ENCODE measurements at regions of chr2 and their contacts with region 1.

Region 1: GRCh38 chr2:120343433-120344105 is 2.4 kb upstream of the INHBB start:
- DNase-seq: peak; percentile 90
- ATAC-seq: peak; percentile 78
- H3K4me3 Mint-ChIP-seq: peak overlapping the region; percentile 53
- H3K27ac Mint-ChIP-seq: no peak overlapping the region
- H3K4me1 Mint-ChIP-seq: peaks cover 31% of the 10 kb centered on the region
- H3K27me3 Mint-ChIP-seq: peaks cover 79% of the 10 kb centered on the region
- CTCF ChIP-seq: peak; percentile 61

Region 2: GRCh38 chr2:120323214-120323613 is 20.4 kb before region 1 on chr2:
- CTCF ChIA-PET with region 1: interaction called, 10 read pairs
- POLR2A ChIA-PET with region 1: no interaction called
- DNase-seq: no peak
- ATAC-seq: no peak
- H3K4me3 Mint-ChIP-seq: no peak overlapping the region
- H3K27ac Mint-ChIP-seq: no peak overlapping the region
- H3K4me1 Mint-ChIP-seq: no peaks in the 10 kb centered on the region
- H3K27me3 Mint-ChIP-seq: peaks cover 5% of the 10 kb centered on the region
- CTCF ChIP-seq: no peak

Region 3: DNA sequence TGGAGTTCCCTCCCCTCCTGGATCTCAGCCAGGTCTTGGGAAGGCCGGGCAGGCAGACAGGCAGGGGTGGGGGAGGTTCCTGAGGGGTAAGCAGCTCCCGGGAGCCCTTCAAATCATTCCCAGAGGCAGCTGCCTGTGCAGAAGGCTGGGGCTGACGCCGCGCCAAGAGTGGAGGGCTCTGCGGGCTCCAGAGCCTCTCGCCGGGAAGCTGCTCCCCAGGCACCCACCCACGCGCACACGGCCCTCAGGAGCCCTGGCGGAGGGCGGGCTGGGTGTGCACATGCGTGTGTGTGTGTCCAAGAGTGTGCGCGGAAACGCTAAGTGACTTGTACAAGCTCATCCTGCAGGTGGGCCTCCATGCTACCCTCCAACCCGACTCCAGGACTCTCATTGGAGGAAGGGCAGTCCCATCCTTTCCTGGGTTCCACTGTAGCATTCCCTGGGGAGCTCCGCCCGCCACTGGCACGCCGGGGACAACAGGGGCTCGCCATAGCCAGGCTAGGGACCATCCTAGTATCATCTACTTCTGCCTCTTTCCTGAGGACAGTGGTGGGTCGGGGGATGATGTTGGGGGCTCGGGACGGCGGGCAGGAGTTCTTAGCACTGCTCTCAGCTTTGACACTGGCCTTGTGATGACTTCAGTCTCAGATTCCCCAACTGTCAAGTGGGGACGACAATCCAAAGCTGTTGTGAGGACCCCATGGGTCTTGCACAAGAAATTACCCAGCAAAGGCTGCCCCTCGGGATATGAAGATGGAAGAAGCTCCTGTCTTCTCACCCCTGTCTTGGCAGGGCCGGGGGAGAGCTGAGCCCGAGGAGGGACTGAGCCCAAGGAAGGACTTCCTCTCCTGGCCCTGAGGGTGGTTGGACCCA is 52.7 kb after region 1 on chr2:
- CTCF ChIA-PET with region 1: interaction called, 13 read pairs
- POLR2A ChIA-PET with region 1: no interaction called
- DNase-seq: no peak
- ATAC-seq: peak; percentile 65
- H3K4me3 Mint-ChIP-seq: no peak overlapping the region
- H3K27ac Mint-ChIP-seq: no peak overlapping the region
- H3K4me1 Mint-ChIP-seq: peaks cover 7% of the 10 kb centered on the region
- H3K27me3 Mint-ChIP-seq: peaks cover 7% of the 10 kb centered on the region
- CTCF ChIP-seq: no peak

Region 4: GRCh38 chr2:120465989-120466703 is 122.6 kb after region 1 on chr2:
- CTCF ChIA-PET with region 1: interaction called, 22 read pairs
- POLR2A ChIA-PET with region 1: interaction called, 5 read pairs
- DNase-seq: peak; percentile 81
- ATAC-seq: peak; percentile 88
- H3K4me3 Mint-ChIP-seq: peak overlapping the region; percentile 53
- H3K27ac Mint-ChIP-seq: no peak overlapping the region
- H3K4me1 Mint-ChIP-seq: peaks cover 15% of the 10 kb centered on the region
- H3K27me3 Mint-ChIP-seq: peaks cover 100% of the 10 kb centered on the region
- CTCF ChIP-seq: no peak

Region 5: GRCh38 chr2:120520929-120521912 is 177.7 kb after region 1 on chr2:
- CTCF ChIA-PET with region 1: interaction called, 13 read pairs
- POLR2A ChIA-PET with region 1: no interaction called
- DNase-seq: peak; percentile 84
- ATAC-seq: peak; percentile 83
- H3K4me3 Mint-ChIP-seq: no peak overlapping the region
- H3K27ac Mint-ChIP-seq: no peak overlapping the region
- H3K4me1 Mint-ChIP-seq: peaks cover 19% of the 10 kb centered on the region
- H3K27me3 Mint-ChIP-seq: peaks cover 44% of the 10 kb centered on the region
- CTCF ChIP-seq: peak; percentile 95

Measured in WTC11 (cell line).